ENCODE measurements at regions of chr2 and their contacts with region 1.

Region 1: DNA sequence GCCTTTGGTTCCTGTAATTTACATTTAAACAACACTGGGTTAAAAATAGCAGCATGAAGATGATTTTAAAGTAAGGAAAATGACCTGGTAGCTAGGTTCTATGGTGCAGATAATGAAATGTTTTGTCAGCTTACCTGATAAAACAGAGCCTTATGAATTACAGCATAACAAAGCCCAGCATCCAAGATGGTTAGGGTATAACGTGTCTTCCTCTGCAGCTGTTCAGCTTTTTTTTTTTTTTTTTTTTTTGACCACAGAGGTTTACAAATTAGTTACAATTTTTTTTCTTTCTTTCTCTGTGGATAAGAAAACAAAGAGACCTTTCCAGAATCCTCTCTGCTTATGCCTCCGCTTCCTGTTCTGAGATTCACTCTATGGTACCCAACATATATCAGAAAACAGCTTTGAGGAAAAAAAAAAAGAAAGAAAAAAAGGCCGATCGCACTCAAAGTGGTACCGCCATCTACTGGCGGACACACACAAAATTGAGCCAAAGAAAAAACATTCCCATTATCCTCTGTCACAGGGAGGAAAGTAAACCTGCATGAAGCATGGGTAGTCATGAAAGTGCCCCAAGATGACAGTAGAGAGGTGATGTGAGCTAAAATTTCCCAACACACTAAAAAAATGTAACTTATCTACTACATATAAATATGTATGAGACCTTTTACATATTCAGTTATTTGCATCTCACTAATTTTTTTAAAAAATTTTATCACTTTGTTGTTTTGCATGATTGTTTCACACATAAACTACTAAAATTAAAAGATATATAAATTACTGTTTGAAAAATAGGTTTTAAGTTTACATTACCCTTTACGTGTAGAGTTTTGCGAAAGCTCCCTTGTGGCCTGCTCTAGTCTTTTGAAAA is at the start of gene SCN3A:
- DNase-seq: peak; percentile 73
- H3K4me3 ChIP-seq: no peak within 1 kb of the TSS
- H3K27ac ChIP-seq: no peak within 1 kb of the TSS
- H3K4me1 ChIP-seq: no peaks in the 10 kb centered on the region
- H3K27me3 ChIP-seq: no peaks in the 10 kb centered on the region
- CTCF ChIP-seq: peak; percentile 88
- total RNA-seq, gene SCN3A: 0.04 and 0.07 TPM in 2 replicates

Region 2: DNA sequence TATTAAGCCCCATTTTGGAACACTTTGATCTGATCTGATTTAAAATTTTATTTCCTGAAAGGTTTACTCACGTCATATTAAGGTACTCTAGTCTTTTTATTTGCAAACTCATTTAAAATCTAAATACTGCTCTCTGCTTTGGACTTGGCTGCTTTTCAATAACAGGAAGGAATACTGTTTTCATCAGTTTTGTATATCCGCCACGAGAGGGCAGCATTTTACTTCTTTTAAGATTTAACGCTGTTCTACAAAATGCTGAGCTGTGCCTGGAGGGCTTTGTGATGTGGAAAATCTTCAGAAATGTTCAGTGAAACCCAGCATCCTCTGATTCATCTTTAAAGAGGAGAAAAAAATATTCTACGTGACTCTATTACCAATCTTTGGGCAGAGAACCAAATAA is 211.1 kb before region 1 on chr2:
- CTCF ChIA-PET with region 1: interaction called, 11 read pairs
- POLR2A ChIA-PET with region 1: no interaction called
- intact Hi-C with region 1: no loop called
- DNase-seq: peak; percentile 88
- H3K4me3 ChIP-seq: no peak overlapping the region
- H3K27ac ChIP-seq: no peak overlapping the region
- H3K4me1 ChIP-seq: peaks cover 20% of the 10 kb centered on the region
- H3K27me3 ChIP-seq: no peaks in the 10 kb centered on the region
- CTCF ChIP-seq: peak; percentile 63

Region 3: GRCh38 chr2:165015052-165015642 is 188.8 kb before region 1 on chr2:
- CTCF ChIA-PET with region 1: interaction called, 34 read pairs
- POLR2A ChIA-PET with region 1: no interaction called
- intact Hi-C with region 1: loop called (anchors 1 kb)
- DNase-seq: peak; percentile 77
- H3K4me3 ChIP-seq: no peak overlapping the region
- H3K27ac ChIP-seq: no peak overlapping the region
- H3K4me1 ChIP-seq: no peaks in the 10 kb centered on the region
- H3K27me3 ChIP-seq: no peaks in the 10 kb centered on the region
- CTCF ChIP-seq: peak; percentile 98

Region 4: GRCh38 chr2:165115258-165115657 is 88.7 kb before region 1 on chr2:
- CTCF ChIA-PET with region 1: interaction called, 14 read pairs
- POLR2A ChIA-PET with region 1: no interaction called
- intact Hi-C with region 1: no loop called
- DNase-seq: no peak
- H3K4me3 ChIP-seq: no peak overlapping the region
- H3K27ac ChIP-seq: no peak overlapping the region
- H3K4me1 ChIP-seq: no peaks in the 10 kb centered on the region
- H3K27me3 ChIP-seq: no peaks in the 10 kb centered on the region
- CTCF ChIP-seq: no peak

Region 5: DNA sequence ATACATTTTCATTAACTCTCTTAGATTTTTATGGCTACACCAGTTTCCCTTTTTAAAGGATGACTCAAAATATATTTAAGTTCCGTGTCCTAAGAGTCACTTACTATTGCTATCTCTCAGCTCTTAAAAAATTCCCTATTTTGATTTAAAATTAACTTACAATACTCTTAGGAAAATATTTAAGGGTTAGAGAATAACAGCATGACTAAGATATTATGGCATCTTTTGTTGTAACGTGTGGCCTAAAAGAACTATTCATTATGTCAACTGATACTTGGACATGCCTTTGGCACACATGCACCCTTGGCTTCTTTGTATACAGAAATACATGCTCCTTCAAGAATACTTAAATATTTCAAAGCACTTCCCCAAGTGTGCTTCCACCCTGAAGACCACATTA is 42.4 kb before region 1 on chr2:
- CTCF ChIA-PET with region 1: interaction called, 10 read pairs
- POLR2A ChIA-PET with region 1: no interaction called
- intact Hi-C with region 1: no loop called
- DNase-seq: no peak
- H3K4me3 ChIP-seq: no peak overlapping the region
- H3K27ac ChIP-seq: no peak overlapping the region
- H3K4me1 ChIP-seq: no peaks in the 10 kb centered on the region
- H3K27me3 ChIP-seq: no peaks in the 10 kb centered on the region
- CTCF ChIP-seq: no peak

Region 6: GRCh38 chr2:165450156-165450555 is 246.2 kb after region 1 on chr2:
- CTCF ChIA-PET with region 1: no interaction called
- POLR2A ChIA-PET with region 1: no interaction called
- intact Hi-C with region 1: no loop called
- DNase-seq: peak; percentile 80
- H3K4me3 ChIP-seq: no peak overlapping the region
- H3K27ac ChIP-seq: peak overlapping the region; percentile 87
- H3K4me1 ChIP-seq: peaks cover 47% of the 10 kb centered on the region
- H3K27me3 ChIP-seq: no peaks in the 10 kb centered on the region
- CTCF ChIP-seq: peak; percentile 40; the same call in 1 of the 2 replicates

Measured in A673 (cell line).